Gastrocnemius medialis (tissue), 4 donors: ENCODE measurements at regions of chr5 and their contacts with region 1.

Region 1: GRCh38 chr5:135246923-135247795 is 151.9 kb downstream of the MACROH2A1 start:
- DNase-seq: no peak
- ATAC-seq: peak in 1 of 2 donors; percentile 25
- H3K4me3 ChIP-seq: no peak overlapping the region
- H3K27ac ChIP-seq: peak overlapping the region in 3 of 4 donors; percentile 30 to 93 (median 92)
- H3K4me1 ChIP-seq: peaks cover 58% of the 10 kb centered on the region in 2 donors
- H3K27me3 ChIP-seq: no peaks in the 10 kb centered on the region
- CTCF ChIP-seq: no peak
- POLR2A ChIP-seq: no peak

Region 2: DNA sequence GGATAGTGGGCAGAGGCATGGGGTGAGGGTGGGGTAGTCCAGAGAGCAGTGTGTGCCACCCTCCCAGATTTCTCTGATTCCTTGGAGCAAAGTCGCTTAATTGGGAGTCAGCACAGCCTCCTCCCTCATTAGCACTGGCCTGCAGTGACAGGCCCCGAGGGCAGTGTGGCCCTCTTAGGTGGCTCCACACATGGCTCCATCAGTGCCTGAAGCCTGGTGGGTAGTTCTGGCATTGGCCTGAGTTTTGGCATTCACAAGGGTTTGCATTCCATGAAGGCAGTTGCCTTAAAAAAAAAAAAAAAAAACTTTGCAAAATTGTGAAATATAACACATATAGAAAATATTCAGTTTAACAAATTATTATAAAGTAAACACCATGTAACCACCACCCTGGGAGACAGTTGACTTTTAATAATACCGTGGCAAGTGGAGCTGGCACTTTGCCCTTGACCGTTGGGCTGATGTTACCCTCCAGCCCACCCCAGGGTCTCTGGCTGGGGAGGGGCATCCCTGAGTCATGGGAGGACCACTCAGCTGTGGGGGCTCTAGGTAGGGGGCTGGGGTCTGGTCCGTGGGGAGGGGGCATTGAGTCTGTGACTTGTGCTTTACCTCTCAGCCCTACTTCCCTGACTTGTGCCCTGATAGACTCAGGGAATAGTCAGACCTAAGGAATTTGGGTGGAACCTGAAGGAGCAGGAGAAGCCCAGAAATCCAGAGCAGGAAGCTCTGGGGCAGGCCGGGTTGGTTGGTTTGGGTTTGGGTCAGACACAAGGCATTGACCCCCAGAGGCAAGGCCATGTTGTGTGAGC is 161.8 kb before region 1 on chr5:
- in situ Hi-C with region 1: no loop called
- intact Hi-C with region 1: no loop called
- DNase-seq: no peak
- ATAC-seq: no peak
- H3K4me3 ChIP-seq: no peak overlapping the region
- H3K27ac ChIP-seq: no peak overlapping the region
- H3K4me1 ChIP-seq: no peaks in the 10 kb centered on the region
- H3K27me3 ChIP-seq: no peaks in the 10 kb centered on the region
- CTCF ChIP-seq: no peak
- POLR2A ChIP-seq: no peak

Region 3: GRCh38 chr5:135398853-135399523 is 151.8 kb after region 1 on chr5 and contains the start of gene MACROH2A1:
- in situ Hi-C with region 1: no loop called
- intact Hi-C with region 1: loop called (anchors 10 kb)
- DNase-seq: peak; percentile 70 to 84
- ATAC-seq: peak; percentile 80 to 93
- H3K4me3 ChIP-seq: peak within 1 kb of the TSS; percentile 70 to 96 (median 81)
- H3K27ac ChIP-seq: peak within 1 kb of the TSS; percentile 76 to 93 (median 82)
- H3K4me1 ChIP-seq: peaks cover 39 to 46% of the 10 kb centered on the region in 2 donors
- H3K27me3 ChIP-seq: no peaks in the 10 kb centered on the region
- CTCF ChIP-seq: peak in 4 of 5 experiments; percentile 10 to 29 (median 15)
- POLR2A ChIP-seq: peak; percentile 95 to 97
- total RNA-seq, gene MACROH2A1: 104 to 167 (median 136) TPM

Region 4: DNA sequence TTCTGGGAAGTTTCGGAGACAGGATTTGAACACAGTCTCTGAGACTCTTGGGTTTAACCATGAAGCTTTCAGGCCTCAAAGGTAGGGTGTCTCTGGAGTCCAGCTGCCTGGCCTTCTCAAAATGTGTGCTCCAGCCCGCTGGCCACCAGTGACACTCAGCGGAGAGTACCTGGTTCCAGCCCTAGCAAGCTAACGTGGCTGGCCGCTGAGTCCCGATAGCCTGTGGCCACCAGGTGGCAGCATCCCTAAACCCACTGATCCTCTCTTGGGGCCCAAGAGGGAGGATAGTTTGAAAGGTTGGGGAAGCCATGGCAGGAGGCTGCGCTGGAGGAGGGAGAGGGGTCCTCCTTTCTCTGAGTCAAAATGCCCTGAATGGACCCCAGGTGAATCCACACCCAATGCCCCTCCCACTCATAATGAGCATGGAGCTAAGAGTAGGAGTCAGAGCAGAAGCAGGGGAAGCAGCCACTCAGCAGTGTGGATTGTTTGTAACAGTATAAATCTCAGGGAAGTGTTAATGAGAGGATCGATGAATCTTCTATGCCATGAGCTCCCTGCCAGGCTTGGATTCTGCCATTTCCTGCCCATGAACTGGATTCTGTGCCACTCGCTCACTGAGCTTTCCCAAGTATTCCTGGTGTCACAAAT is 210.4 kb after region 1 on chr5:
- in situ Hi-C with region 1: no loop called
- intact Hi-C with region 1: no loop called
- DNase-seq: peak in 1 of 2 donors; percentile 37
- ATAC-seq: peak; percentile 59 to 70
- H3K4me3 ChIP-seq: no peak overlapping the region
- H3K27ac ChIP-seq: no peak overlapping the region
- H3K4me1 ChIP-seq: no peaks in the 10 kb centered on the region
- H3K27me3 ChIP-seq: no peaks in the 10 kb centered on the region
- CTCF ChIP-seq: peak; percentile 53 to 84 (median 65)
- POLR2A ChIP-seq: no peak